Mucosa of descending colon (tissue), 3 donors: ENCODE measurements at regions of chr10 and their contacts with region 1.

Region 1: GRCh38 chr10:99630439-99630838 is 10.2 kb upstream of the SLC25A28 start:
- DNase-seq: peak in 1 of 3 donors; percentile 83
- ATAC-seq: peak; percentile 58
- H3K4me3 ChIP-seq: no peak overlapping the region
- H3K4me1 ChIP-seq: no peaks in the 10 kb centered on the region
- CTCF ChIP-seq: no peak

Region 2: DNA sequence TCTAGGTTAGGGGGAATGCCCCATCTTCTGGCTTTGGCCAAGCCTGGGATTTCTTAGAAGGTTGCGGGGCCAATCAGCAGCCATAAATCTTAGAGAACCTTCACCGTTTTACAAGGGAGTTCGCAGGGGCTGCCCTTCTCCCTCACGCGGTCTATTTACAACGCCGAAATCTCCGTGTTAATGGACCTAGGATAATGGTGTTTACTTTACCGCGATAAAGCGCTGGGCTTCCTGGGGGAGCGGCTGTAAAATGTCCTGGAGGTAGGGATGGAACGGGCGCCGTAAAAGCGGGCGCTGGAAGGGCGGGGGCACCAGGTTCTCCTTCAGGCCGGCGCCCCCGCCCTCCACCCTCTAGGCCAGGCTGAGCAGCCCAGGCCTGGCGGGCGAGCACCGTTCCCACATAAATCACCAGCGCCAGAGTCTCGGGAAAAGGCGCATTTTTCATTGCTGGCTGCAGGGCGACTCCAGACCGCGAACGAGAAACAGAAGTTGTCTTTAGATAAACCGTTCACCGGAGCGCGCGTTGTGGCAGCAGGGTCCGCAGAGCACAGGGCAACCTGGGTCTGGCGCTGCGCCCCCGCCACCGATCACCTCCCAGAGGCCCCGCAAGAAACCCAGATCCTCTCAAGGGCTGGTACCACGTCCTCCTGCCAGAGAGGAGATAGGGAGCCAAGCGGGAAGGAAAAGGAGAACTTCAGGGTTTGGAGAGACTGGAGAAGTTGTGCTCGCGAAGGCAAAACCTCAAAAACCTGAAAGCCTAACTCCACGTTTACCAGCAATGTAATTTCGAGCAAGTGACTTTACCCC is 110.2 kb before region 1 on chr10:
- intact Hi-C with region 1: no loop called
- DNase-seq: peak in 2 of 3 donors; percentile 23 to 40
- ATAC-seq: peak; percentile 50
- H3K4me3 ChIP-seq: no peak overlapping the region
- H3K4me1 ChIP-seq: peaks cover 8% of the 10 kb centered on the region
- CTCF ChIP-seq: no peak

Region 3: GRCh38 chr10:99709480-99710229 is 79.2 kb after region 1 on chr10:
- intact Hi-C with region 1: loop called in 1 of 2 experiments (anchors 10 kb)
- DNase-seq: no peak
- ATAC-seq: peak; percentile 19
- H3K4me3 ChIP-seq: no peak overlapping the region
- H3K4me1 ChIP-seq: no peaks in the 10 kb centered on the region
- CTCF ChIP-seq: no peak